Pancreas (tissue), 10 donors: ENCODE measurements at regions of chr2 and their contacts with region 1.

Region 1: DNA sequence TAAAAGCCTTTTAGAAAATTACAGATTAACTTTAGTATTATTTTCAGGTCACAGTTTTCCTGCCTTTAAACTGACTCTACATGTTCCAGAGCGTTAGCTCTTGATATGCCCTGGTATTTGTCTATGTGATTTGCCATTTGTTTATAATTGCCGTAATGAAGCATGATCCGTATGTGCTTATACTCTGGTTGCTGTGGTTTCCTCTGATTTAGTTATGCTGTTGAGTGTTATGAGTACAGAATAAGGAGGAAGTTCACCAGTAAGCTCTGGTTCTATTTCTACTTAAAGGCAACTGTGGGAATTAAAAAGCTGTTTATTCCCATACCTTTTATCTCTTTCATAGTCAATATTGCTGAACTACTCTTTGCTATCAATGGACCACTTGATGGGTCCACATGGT is 123.5 kb downstream of the OSBPL6 start:
- DNase-seq: no peak
- ATAC-seq: peak in 2 of 4 donors; percentile 38 to 41
- H3K4me3 ChIP-seq: no peak overlapping the region
- H3K27ac ChIP-seq: no peak overlapping the region
- H3K4me1 ChIP-seq: peaks cover 0 to 20% (median 0%) of the 10 kb centered on the region in 3 donors
- H3K27me3 ChIP-seq: no peaks in the 10 kb centered on the region
- CTCF ChIP-seq: no peak

Region 2: GRCh38 chr2:178404368-178404767 is 86.6 kb after region 1 on chr2:
- intact Hi-C with region 1: loop called in 1 of 3 experiments (anchors 10 kb)
- DNase-seq: no peak
- ATAC-seq: peak in 1 of 4 donors; percentile 20
- H3K4me3 ChIP-seq: no peak overlapping the region
- H3K27ac ChIP-seq: no peak overlapping the region
- H3K4me1 ChIP-seq: no peaks in the 10 kb centered on the region
- H3K27me3 ChIP-seq: peaks cover 0 to 2% (median 0%) of the 10 kb centered on the region in 4 donors
- CTCF ChIP-seq: no peak